ENCODE measurements at regions of chr9 and their contacts with region 1.

Region 1: DNA sequence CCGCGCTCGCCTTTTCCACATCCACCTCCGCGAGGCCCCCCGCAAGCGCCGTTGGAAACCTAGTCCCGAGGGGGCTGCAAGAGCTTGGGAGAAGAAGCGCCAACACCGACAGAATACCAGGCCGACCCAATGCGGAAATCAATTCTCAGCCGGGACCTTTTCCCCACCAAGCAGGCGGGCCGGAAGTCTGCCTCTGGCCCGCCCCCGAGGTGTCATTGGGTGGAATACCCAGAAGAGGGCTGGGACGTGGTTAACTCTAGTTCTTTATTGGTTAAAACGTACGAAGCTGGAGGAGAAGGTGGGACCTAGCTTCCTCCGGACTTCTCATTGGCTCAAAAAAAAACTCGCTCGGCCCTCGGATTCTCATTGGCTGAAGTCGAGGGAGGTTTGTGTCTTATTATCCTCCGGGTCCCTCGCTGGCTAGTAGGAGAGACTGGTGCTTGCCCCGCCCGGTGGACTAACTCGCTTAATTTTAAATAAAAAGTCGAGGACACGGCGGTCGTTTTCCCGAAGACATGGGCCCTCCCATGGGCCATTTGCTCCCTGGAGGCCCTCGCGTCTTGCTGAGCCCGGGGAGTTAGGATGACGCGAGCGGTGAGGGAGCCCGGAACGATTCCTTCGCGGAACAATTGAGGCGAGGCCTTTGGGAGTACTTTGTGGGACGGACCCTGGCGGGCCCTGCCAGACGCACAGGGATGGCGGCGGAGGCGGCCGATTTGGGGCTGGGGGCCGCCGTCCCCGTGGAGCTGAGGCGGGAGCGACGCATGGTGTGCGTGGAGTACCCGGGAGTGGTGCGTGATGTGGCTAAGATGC is at the start of gene GTF3C5:
- DNase-seq: peak; percentile 95
- H3K4me3 ChIP-seq: peak within 1 kb of the TSS; percentile 64 to 100 (median 80)
- H3K27ac ChIP-seq: peak within 1 kb of the TSS; percentile 90 to 94 (median 92)
- H3K4me1 ChIP-seq: peaks cover 12 to 30% (median 23%) of the 10 kb centered on the region in 4 donors
- H3K27me3 ChIP-seq: no peaks in the 10 kb centered on the region
- CTCF ChIP-seq: peak in 2 of 5 experiments; percentile 44 to 46
- EP300 ChIP-seq: no peak
- POLR2A ChIP-seq: peak; percentile 82
- total RNA-seq, gene GTF3C5: 44.5 to 56.9 (median 50.2) TPM

Region 2: DNA sequence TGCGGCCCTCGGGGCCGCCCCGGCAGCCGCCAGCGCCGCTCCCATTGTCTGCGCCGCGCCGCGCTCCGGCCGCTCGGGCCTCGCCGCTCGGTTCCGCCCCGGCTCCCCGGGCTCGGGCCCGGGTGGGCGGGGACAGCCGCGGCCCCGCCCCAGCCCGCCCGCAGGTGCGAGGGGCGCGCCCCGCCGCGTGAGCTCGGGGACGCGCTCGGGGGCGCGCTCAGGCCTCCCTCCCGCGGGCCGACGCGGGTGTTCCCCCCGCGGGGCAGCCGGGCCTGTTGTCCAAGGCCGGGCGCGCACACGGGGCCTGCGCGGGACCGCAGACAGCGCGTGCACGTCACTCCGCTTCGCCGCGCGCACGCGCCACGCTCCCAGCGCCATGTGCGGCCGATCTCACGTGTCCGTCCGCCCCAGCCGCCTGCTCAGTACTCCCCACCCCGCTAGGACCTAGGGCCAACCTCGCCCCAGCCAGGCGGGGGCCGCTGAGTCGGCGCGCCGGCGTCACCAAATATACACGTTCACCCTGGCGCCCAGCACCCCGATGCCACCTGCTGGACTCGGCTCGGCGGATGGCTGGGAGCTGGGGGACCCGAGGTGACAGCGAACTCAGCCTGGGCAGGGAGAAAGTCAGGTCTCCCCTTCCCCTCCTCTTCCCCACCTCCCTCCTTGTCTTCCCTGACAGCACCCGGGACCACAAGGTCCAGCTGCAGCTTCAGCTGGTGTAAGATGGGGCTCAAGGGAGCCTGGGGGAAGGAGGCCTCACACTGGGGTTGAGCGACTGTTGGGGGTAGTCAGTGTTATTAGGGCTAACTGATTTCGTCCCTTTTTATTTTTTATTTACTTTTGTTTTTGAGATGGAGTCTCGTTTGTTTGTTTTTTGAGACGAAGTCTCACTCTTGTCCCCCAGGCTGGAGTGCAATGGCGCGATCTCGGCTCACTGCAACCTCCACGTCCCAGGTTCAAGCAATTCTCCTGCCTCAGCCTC is 118.9 kb after region 1 on chr9:
- in situ Hi-C with region 1: no loop called
- intact Hi-C with region 1: no loop called
- DNase-seq: peak; percentile 93
- H3K4me3 ChIP-seq: peak overlapping the region in 3 of 4 donors; percentile 45 to 75 (median 64)
- H3K27ac ChIP-seq: peak overlapping the region; percentile 90 to 94 (median 94)
- H3K4me1 ChIP-seq: peaks cover 16 to 33% (median 26%) of the 10 kb centered on the region in 4 donors
- H3K27me3 ChIP-seq: no peaks in the 10 kb centered on the region
- CTCF ChIP-seq: peak in 4 of 5 experiments; percentile 12 to 62 (median 32)
- EP300 ChIP-seq: peak; percentile 25
- POLR2A ChIP-seq: peak; percentile 62

Region 3: DNA sequence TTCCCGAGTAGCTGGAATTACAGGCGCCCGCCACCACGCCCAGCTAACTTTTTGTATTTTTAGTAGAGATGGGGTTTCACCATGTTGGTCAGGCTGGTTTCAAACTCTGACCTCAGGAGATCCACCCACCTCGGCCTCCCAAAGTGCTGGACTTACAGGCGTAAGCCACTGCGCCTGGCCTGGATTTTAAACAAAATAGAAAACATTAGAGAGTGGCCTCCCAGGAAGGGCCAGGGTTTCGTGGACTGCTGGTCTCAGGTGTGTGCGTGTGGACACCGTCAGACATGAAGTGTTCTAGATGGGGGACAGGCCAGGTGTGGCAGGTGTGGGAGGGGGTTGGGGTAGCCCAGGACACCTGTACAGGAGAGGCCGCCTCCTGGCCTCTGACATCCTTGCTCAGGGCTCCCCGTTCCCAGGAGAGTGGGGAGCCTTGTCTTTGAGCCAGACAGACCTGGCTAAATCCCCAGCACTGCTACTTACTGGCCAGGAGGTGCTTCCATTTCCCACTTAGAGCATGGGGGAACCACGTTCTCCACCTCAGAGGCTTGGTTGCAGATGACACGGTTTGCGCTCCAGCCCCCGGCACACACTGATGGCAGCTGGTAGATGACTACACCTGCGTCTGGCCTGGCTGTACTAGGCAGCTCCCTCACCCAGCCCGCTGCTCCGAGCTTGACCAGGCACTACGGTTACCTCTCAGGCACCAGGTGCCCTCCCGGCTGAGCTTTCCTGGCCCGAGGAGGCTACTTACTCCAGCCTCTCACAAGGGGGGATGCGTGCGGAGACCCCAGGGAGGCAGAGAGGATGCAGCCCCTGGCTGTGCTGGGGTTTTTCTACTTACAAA is 140.4 kb after region 1 on chr9:
- in situ Hi-C with region 1: loop called in 1 of 4 experiments (anchors 10 kb)
- intact Hi-C with region 1: no loop called
- DNase-seq: no peak
- H3K4me3 ChIP-seq: no peak overlapping the region
- H3K27ac ChIP-seq: no peak overlapping the region
- H3K4me1 ChIP-seq: no peaks in the 10 kb centered on the region
- H3K27me3 ChIP-seq: peaks cover 4% of the 10 kb centered on the region
- CTCF ChIP-seq: no peak
- EP300 ChIP-seq: no peak
- POLR2A ChIP-seq: no peak

Region 4: DNA sequence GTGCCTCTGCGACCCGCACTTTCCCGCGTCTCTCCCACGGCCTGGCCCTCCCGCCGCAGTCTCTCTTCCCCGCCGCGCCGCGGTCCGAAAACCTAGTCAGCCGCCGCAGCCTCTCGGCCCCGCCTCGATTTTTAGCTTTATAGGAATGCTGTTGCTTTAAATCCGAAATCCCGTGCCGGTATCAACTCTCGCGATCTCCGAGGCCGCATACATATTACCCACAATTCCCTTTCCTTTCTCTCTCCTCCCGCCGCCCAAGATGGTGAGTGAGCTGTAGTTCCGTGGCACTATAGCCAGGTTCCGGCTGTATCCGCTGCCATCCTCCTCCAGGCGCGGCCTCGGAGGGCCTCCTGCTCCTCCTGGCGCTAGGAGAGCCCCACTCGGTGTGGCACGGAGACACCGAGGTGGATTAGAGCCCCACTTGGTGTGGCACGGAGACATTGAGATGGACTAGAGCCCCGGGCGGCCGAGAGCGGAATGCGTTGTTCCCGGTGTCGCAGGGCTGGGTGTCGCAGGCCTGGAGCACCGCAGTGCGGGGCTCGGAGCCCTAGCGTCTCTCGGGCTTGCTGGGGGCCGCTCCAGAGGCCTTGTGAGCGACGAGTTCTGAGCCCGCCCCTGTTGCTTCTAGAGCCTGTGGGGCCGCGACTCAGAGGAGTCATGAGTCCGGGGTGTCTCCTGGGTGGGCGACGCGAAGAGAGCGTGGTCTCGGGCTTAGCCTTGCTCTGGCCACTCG is 317.6 kb after region 1 on chr9 and contains the starts of genes MED22 and RPL7A:
- in situ Hi-C with region 1: loop called in 1 of 4 experiments (anchors 25 kb)
- intact Hi-C with region 1: no loop called
- DNase-seq: peak; percentile 95
- H3K4me3 ChIP-seq: peak within 1 kb of the TSS; percentile 90 to 99 (median 98)
- H3K27ac ChIP-seq: peak within 1 kb of the TSS; percentile 93 to 97 (median 94)
- H3K4me1 ChIP-seq: peaks cover 17 to 29% (median 25%) of the 10 kb centered on the region in 4 donors
- H3K27me3 ChIP-seq: no peaks in the 10 kb centered on the region
- CTCF ChIP-seq: peak in 1 of 5 experiments; percentile 47
- EP300 ChIP-seq: no peak
- POLR2A ChIP-seq: peak; percentile 95
- total RNA-seq, gene MED22: 21.5 to 50.5 (median 25.4) TPM
- total RNA-seq, gene RPL7A: 725 to 1,490 (median 1,034) TPM

Region 5: GRCh38 chr9:133768859-133769425 is 738.4 kb after region 1 on chr9:
- in situ Hi-C with region 1: no loop called
- intact Hi-C with region 1: no loop called
- DNase-seq: no peak
- H3K4me3 ChIP-seq: no peak overlapping the region
- H3K27ac ChIP-seq: no peak overlapping the region
- H3K4me1 ChIP-seq: no peaks in the 10 kb centered on the region
- H3K27me3 ChIP-seq: no peaks in the 10 kb centered on the region
- CTCF ChIP-seq: no peak
- EP300 ChIP-seq: no peak
- POLR2A ChIP-seq: no peak